ENCODE measurements at regions of chr14 and their contacts with region 1.

Region 1: GRCh38 chr14:78022059-78022458 is 148.1 kb upstream of the NRXN3 start:
- DNase-seq: peak; percentile 68 to 95
- H3K4me3 ChIP-seq: no peak overlapping the region
- H3K27ac ChIP-seq: no peak overlapping the region
- H3K4me1 ChIP-seq: no peaks in the 10 kb centered on the region; a peak in 2 of 7 replicates
- H3K27me3 ChIP-seq: no peaks in the 10 kb centered on the region
- CTCF ChIP-seq: peak; percentile 85 to 94 (median 88)
- EP300 ChIP-seq: no peak
- POLR2A ChIP-seq: no peak
- RAD21 ChIP-seq: peak; percentile 98

Region 2: DNA sequence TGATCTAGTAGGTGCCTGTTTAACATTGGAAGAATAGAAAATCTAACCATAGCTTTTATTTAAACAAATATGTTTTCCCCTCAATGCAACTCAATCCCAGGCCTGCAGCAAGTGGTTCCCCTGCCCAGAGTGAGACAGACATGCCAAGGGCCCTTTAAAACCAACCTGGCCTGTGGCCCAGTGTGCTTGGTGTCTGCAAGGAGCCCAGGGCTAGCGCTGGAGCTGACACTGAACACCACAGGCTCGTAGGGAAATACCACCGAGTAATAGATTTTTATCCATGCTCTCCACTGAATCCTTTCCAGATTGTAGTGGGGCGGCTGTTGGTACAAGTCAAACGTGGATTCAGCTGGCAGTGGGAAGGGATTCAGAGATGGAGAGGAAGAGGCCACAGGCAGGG is 52.5 kb after region 1 on chr14:
- CTCF ChIA-PET with region 1: interaction called, 11 read pairs
- POLR2A ChIA-PET with region 1: no interaction called
- DNase-seq: no peak
- H3K4me3 ChIP-seq: no peak overlapping the region
- H3K27ac ChIP-seq: no peak overlapping the region
- H3K4me1 ChIP-seq: no peaks in the 10 kb centered on the region
- H3K27me3 ChIP-seq: no peaks in the 10 kb centered on the region
- CTCF ChIP-seq: no peak
- EP300 ChIP-seq: no peak
- POLR2A ChIP-seq: no peak
- RAD21 ChIP-seq: no peak

Region 3: GRCh38 chr14:78135450-78135891 is 113.4 kb after region 1 on chr14:
- CTCF ChIA-PET with region 1: no interaction called
- POLR2A ChIA-PET with region 1: no interaction called
- DNase-seq: no peak
- H3K4me3 ChIP-seq: no peak overlapping the region
- H3K27ac ChIP-seq: no peak overlapping the region
- H3K4me1 ChIP-seq: no peaks in the 10 kb centered on the region
- H3K27me3 ChIP-seq: no peaks in the 10 kb centered on the region
- CTCF ChIP-seq: no peak
- EP300 ChIP-seq: no peak
- POLR2A ChIP-seq: no peak
- RAD21 ChIP-seq: no peak

Region 4: GRCh38 chr14:78157494-78158456 is 135.7 kb after region 1 on chr14:
- CTCF ChIA-PET with region 1: interaction called, 35 read pairs
- POLR2A ChIA-PET with region 1: interaction called, 3 read pairs
- DNase-seq: peak in 1 of 2 experiments; percentile 58
- H3K4me3 ChIP-seq: no peak overlapping the region
- H3K27ac ChIP-seq: no peak overlapping the region
- H3K4me1 ChIP-seq: peaks cover 0 to under 1% (median 0%) of the 10 kb centered on the region in 4 experiments; a peak in 1 of 7 replicates
- H3K27me3 ChIP-seq: no peaks in the 10 kb centered on the region
- CTCF ChIP-seq: no peak
- EP300 ChIP-seq: no peak
- POLR2A ChIP-seq: no peak
- RAD21 ChIP-seq: peak in 1 of 2 experiments; percentile 1; a peak in 1 of 4 replicates